Naive thymus-derived CD4-positive, alpha-beta T cell (primary cell): ENCODE measurements at regions of chr13 and their contacts with region 1.

Region 1: GRCh38 chr13:49606747-49607648 is 21.3 kb upstream of the ARL11 start:
- DNase-seq: peak; percentile 57 to 80 (median 72)
- ATAC-seq: peak; percentile 98
- H3K4me3 ChIP-seq: peak overlapping the region; percentile 49
- H3K4me3 Mint-ChIP-seq: peak overlapping the region; percentile 62 to 92 (median 87)
- H3K27ac ChIP-seq: no peak overlapping the region
- H3K27ac Mint-ChIP-seq: peak overlapping the region in 8 of 9 donors; percentile 43 to 91 (median 75)
- H3K4me1 ChIP-seq: no peaks in the 10 kb centered on the region
- H3K4me1 Mint-ChIP-seq: peaks cover 0 to 7% (median 4%) of the 10 kb centered on the region in 7 donors
- H3K27me3 ChIP-seq: no peaks in the 10 kb centered on the region
- H3K27me3 Mint-ChIP-seq: peaks cover 0 to 5% (median 0%) of the 10 kb centered on the region in 5 donors

Region 2: DNA sequence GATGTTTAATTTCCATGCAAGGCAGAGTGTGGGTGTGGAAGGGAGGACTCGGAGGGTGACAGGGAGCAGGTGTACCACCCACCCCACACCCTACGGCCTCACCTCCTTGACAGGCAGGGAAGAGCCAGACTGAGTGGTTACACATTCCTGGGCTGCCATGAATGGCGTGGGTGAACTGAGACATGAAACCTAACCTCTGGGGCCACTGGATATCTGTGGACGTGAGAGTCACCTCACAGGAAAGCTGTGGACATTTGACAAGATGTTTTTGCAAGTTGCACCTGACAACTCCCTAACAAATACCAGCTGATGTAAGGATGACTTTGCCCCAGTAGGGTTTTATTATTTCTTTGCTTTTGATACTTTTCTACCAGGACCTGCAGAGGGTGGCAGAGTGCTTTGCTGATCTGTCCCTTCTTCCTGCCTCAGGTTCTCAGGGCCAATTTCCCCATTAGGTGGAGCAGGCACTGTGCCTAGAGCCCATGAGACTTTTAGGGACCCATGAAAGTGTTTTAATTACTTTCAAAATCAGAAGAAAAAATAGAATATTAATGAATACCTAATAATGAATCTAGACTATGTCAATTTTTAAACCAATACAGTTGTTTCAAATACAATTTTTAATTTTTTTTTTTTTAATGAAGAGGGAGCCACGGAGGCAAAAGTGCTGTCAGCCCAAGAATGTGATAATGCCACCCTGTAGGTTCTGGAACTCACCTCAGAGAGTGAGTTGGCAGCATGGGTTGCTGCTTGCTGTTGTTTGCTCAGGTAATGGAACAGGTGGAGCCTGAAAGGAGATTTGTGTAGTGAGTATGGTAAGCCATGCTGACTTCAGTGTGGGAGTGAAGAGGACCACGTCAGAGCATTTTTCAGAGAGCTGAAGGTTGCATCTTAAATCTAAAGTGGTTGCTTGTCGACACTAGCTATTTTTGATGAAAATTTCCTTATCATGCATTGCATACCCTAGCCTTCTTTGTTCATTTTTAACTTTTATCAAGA is 1011.3 kb before region 1 on chr13:
- CTCF ChIA-PET with region 1: no interaction called
- POLR2A ChIA-PET with region 1: no interaction called
- intact Hi-C with region 1: loop called in 1 of 2 experiments (anchors 5 kb)
- DNase-seq: peak in 8 of 9 donors; percentile 24 to 79 (median 60)
- ATAC-seq: peak; percentile 96
- H3K4me3 ChIP-seq: no peak overlapping the region
- H3K4me3 Mint-ChIP-seq: no peak overlapping the region
- H3K27ac ChIP-seq: no peak overlapping the region
- H3K27ac Mint-ChIP-seq: peak overlapping the region in 1 of 9 donors; percentile 10
- H3K4me1 ChIP-seq: no peaks in the 10 kb centered on the region
- H3K4me1 Mint-ChIP-seq: peaks cover 0 to 3% (median 0%) of the 10 kb centered on the region in 7 donors
- H3K27me3 ChIP-seq: no peaks in the 10 kb centered on the region
- H3K27me3 Mint-ChIP-seq: peaks cover 0 to 19% (median 0%) of the 10 kb centered on the region in 5 donors

Region 3: DNA sequence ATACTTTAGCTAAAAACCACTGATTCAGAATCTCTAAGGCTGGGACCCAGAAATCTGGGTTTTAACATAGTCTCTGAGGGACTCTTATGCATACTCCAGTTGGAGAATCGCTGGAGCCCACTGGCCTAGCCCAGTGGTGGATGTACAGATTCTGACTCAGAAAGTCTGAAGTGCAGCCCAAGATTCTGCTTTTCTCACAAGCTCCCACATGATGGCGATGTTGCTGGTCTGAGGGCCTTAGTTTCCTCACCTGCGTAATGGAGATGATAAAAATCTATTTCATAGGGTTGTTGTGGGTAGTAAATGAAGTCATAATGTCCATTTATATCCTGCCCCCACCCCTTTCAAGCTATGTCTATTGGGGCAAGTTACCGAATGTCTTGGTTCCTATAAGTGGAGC is 367.0 kb before region 1 on chr13:
- CTCF ChIA-PET with region 1: interaction called, 4 read pairs
- POLR2A ChIA-PET with region 1: no interaction called
- intact Hi-C with region 1: loop called (anchors 1 to 2 kb)
- DNase-seq: peak in 5 of 9 donors; percentile 21 to 36 (median 33)
- ATAC-seq: peak; percentile 85
- H3K4me3 ChIP-seq: no peak overlapping the region
- H3K4me3 Mint-ChIP-seq: no peak overlapping the region
- H3K27ac ChIP-seq: no peak overlapping the region
- H3K27ac Mint-ChIP-seq: no peak overlapping the region
- H3K4me1 ChIP-seq: no peaks in the 10 kb centered on the region
- H3K4me1 Mint-ChIP-seq: peaks cover 0 to 2% (median 0%) of the 10 kb centered on the region in 7 donors
- H3K27me3 ChIP-seq: no peaks in the 10 kb centered on the region
- H3K27me3 Mint-ChIP-seq: peaks cover 0 to 41% (median 0%) of the 10 kb centered on the region in 5 donors

Region 4: GRCh38 chr13:49371943-49372613 is 234.9 kb before region 1 on chr13:
- CTCF ChIA-PET with region 1: no interaction called
- POLR2A ChIA-PET with region 1: no interaction called
- intact Hi-C with region 1: no loop called
- DNase-seq: peak in 7 of 9 donors; percentile 61 to 86 (median 80)
- ATAC-seq: peak; percentile 82
- H3K4me3 ChIP-seq: no peak overlapping the region
- H3K4me3 Mint-ChIP-seq: peak overlapping the region in 9 of 10 donors; percentile 26 to 83 (median 63)
- H3K27ac ChIP-seq: no peak overlapping the region
- H3K27ac Mint-ChIP-seq: peak overlapping the region in 6 of 9 donors; percentile 2 to 67 (median 59)
- H3K4me1 ChIP-seq: peaks cover 6 to 20% of the 10 kb centered on the region in 2 donors
- H3K4me1 Mint-ChIP-seq: peaks cover 6 to 54% (median 38%) of the 10 kb centered on the region in 7 donors
- H3K27me3 ChIP-seq: no peaks in the 10 kb centered on the region
- H3K27me3 Mint-ChIP-seq: peaks cover 0 to 20% (median 4%) of the 10 kb centered on the region in 5 donors

Region 5: DNA sequence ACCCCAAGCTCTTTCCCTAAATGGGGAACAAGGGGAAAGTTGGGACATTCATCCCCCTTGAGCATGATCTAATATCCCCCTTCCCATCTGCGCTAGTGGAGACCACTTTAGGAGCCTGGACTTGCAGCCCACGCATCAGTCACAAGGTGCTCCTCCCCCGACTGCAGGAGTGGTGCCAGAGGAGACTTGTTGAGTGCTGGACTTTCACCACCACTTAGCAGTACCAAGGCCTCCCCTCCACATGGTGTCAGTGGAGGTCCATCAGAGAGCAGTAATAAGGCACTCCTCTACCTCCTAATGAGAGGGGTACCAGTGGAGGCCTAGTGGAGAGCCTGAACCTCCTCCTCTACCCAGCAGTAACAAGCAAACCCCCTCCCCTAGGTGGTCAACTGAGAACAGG is 185.6 kb before region 1 on chr13:
- CTCF ChIA-PET with region 1: interaction called, 5 read pairs
- POLR2A ChIA-PET with region 1: no interaction called
- intact Hi-C with region 1: loop called (anchors 1 kb)
- DNase-seq: peak in 2 of 9 donors; percentile 15 to 30
- ATAC-seq: no peak
- H3K4me3 ChIP-seq: no peak overlapping the region
- H3K4me3 Mint-ChIP-seq: no peak overlapping the region
- H3K27ac ChIP-seq: no peak overlapping the region
- H3K27ac Mint-ChIP-seq: no peak overlapping the region
- H3K4me1 ChIP-seq: no peaks in the 10 kb centered on the region
- H3K4me1 Mint-ChIP-seq: peaks cover 0 to 2% (median 0%) of the 10 kb centered on the region in 7 donors
- H3K27me3 ChIP-seq: no peaks in the 10 kb centered on the region
- H3K27me3 Mint-ChIP-seq: peaks cover 0 to 5% (median 0%) of the 10 kb centered on the region in 5 donors

Region 6: DNA sequence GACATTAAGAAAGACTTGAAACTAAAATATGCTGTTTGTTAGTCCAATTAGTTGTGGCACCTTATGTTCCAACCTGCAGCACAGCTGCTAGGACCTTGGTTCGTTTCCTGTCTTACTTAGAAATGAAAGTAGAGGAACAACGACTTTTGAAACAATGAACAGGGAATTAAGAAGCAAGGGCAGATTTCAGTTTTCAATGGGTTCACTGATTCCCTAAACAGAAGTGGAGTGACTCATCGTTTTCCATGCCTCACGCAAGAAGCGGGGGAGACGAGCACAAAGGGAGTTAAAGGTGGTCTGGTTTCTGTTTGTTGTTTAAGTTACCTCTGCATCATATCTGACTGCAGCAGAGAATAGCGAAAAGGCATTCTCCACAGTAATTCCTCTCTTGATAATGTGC is 66.4 kb before region 1 on chr13:
- CTCF ChIA-PET with region 1: no interaction called
- POLR2A ChIA-PET with region 1: no interaction called
- intact Hi-C with region 1: loop called (anchors 1 to 5 kb)
- DNase-seq: peak in 6 of 9 donors; percentile 25 to 46 (median 30)
- ATAC-seq: peak; percentile 44
- H3K4me3 ChIP-seq: peak overlapping the region; percentile 38
- H3K4me3 Mint-ChIP-seq: peak overlapping the region; percentile 79 to 89 (median 83)
- H3K27ac ChIP-seq: peak overlapping the region; percentile 76
- H3K27ac Mint-ChIP-seq: peak overlapping the region; percentile 89 to 99 (median 94)
- H3K4me1 ChIP-seq: peaks cover 0 to 18% of the 10 kb centered on the region in 2 donors
- H3K4me1 Mint-ChIP-seq: peaks cover 5 to 26% (median 23%) of the 10 kb centered on the region in 7 donors
- H3K27me3 ChIP-seq: no peaks in the 10 kb centered on the region
- H3K27me3 Mint-ChIP-seq: no peaks in the 10 kb centered on the region

Region 7: DNA sequence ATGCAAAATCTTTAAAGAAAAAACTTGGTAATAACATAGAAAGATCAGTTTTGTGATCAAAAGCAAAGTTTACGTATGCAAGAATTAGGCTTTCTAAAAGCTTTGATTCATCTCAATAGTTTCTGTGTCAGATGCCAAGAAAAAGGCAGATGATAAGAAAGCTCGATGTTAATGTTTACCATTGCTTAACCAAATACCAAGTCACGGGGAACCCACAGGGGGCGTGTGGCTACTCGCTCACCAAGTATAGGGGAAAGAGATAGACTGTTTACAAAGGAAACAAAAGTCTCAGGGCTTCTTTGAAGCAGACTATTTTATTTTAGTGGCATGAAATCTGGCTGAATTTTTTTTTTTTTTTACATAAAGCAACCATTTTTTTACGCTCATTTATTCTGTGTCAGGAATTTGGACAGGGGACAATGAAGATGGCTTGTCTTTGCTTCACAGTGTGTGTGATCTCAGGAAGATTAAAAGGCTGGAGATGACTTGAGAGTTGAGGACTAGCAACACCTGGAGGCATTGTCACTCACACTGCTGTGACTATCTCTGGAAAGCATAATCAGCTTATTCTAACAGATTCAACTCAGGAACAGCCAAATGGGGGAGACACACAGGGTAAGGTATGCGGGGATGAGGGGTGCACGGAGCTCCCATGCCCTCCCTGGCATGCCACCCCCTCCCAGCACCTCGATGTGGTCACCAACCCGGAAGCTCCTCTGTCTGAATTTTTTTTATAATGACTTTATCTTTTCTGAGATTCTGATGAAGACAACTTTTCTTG is 46.5 kb before region 1 on chr13:
- CTCF ChIA-PET with region 1: interaction called, 4 read pairs
- POLR2A ChIA-PET with region 1: no interaction called
- intact Hi-C with region 1: loop called in 1 of 2 experiments (anchors 1 kb)
- DNase-seq: peak in 3 of 9 donors; percentile 4 to 20 (median 13)
- ATAC-seq: no peak
- H3K4me3 ChIP-seq: no peak overlapping the region
- H3K4me3 Mint-ChIP-seq: no peak overlapping the region
- H3K27ac ChIP-seq: no peak overlapping the region
- H3K27ac Mint-ChIP-seq: peak overlapping the region in 4 of 9 donors; percentile 29 to 63 (median 42)
- H3K4me1 ChIP-seq: no peaks in the 10 kb centered on the region
- H3K4me1 Mint-ChIP-seq: peaks cover 4 to 15% (median 9%) of the 10 kb centered on the region in 7 donors
- H3K27me3 ChIP-seq: no peaks in the 10 kb centered on the region
- H3K27me3 Mint-ChIP-seq: no peaks in the 10 kb centered on the region

Region 8: GRCh38 chr13:49585220-49586157 is 21.5 kb before region 1 on chr13 and contains the start of gene RCBTB1:
- CTCF ChIA-PET with region 1: no interaction called
- POLR2A ChIA-PET with region 1: interaction called, 4 read pairs
- intact Hi-C with region 1: loop called (anchors 1 kb)
- DNase-seq: peak; percentile 47 to 74 (median 66)
- ATAC-seq: peak; percentile 97
- H3K4me3 ChIP-seq: peak within 1 kb of the TSS; percentile 56
- H3K4me3 Mint-ChIP-seq: peak within 1 kb of the TSS; percentile 83 to 100 (median 92)
- H3K27ac ChIP-seq: peak within 1 kb of the TSS; percentile 82
- H3K27ac Mint-ChIP-seq: peak within 1 kb of the TSS; percentile 86 to 96 (median 94)
- H3K4me1 ChIP-seq: peaks cover 10 to 16% of the 10 kb centered on the region in 2 donors
- H3K4me1 Mint-ChIP-seq: peaks cover 32 to 53% (median 50%) of the 10 kb centered on the region in 7 donors
- H3K27me3 ChIP-seq: no peaks in the 10 kb centered on the region
- H3K27me3 Mint-ChIP-seq: peaks cover 0 to 3% (median 0%) of the 10 kb centered on the region in 5 donors
- total RNA-seq, gene RCBTB1: 16.3 to 22.2 (median 20.4) TPM